ENCODE measurements at regions of chr16 and their contacts with region 1.

Region 1: GRCh38 chr16:30984669-30985400 is at the start of gene HSD3B7:
- DNase-seq: peak; percentile 97
- H3K4me3 Mint-ChIP-seq: peak within 1 kb of the TSS; percentile 87
- H3K27ac Mint-ChIP-seq: peak within 1 kb of the TSS; percentile 71
- H3K4me1 Mint-ChIP-seq: no peaks in the 10 kb centered on the region
- H3K27me3 Mint-ChIP-seq: no peaks in the 10 kb centered on the region
- CTCF ChIP-seq: peak; percentile 92
- total RNA-seq, gene HSD3B7: 25.3 and 29.2 TPM in 2 replicates

Region 2: DNA sequence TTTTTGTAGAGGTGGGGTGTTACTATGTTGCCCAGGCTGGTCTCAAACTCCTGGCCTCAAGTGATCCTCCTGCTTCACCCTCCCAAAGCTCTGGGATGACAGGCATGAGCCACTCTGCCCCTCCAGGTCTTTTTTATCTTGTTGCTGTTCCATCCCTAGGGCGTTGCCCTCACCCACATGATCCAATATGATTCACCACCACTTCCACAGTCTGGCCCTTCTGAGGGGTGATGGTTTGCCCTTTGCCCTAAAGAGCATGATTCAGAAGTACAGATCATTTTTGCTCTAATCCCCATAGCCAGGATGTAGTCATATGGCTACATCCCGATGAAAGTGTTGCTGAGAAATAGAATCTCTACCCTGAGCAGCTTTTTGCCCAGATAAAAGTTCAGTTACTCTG is 67.3 kb after region 1 on chr16:
- CTCF ChIA-PET with region 1: no interaction called
- intact Hi-C with region 1: no loop called
- DNase-seq: peak; percentile 40
- H3K4me3 Mint-ChIP-seq: no peak overlapping the region
- H3K27ac Mint-ChIP-seq: no peak overlapping the region
- H3K4me1 Mint-ChIP-seq: peaks cover 12% of the 10 kb centered on the region
- H3K27me3 Mint-ChIP-seq: no peaks in the 10 kb centered on the region
- CTCF ChIP-seq: no peak

Region 3: DNA sequence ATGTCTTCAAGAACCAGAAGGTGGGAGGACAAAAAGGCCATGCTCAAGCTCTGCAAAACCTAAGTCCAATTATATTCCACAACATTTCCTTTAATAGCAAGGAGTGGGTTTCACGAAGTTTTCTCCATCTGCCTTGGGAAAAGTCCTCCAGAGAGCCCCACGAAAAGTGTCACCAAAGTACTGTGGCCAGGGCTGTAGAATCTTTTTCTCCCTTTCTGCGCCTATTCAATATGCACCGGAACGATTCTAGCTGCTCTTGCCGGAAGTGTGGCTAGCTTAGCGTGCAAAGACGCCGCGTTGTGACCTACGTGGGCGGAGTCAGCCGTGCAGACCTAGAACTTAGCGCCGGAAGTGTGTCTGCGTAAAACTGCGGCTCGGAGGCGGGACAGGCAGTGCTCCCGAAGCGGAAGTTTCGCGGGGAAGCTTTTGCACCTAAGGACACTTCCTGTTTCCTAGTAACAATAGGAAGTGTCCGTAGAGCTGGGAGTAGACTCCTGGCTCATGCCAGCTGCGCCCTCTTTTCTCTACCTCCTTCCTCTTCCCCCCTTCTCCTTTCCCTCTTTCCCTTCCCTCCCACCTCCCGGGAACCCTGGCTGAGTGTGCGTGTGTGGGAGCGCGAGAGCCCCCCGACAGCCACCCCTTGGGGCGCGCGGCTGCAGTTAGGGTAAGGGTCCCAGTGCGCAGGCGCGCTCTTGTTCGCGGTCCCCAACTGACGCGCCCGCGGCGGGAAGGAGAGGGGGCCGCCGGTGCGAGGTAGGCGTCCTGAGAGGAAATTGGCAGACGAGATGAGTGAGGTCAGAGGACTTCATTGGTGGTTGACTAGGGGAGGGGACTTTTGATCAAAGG is 89.4 kb after region 1 on chr16 and contains the starts of genes ZNF646 and ZNF668:
- CTCF ChIA-PET with region 1: interaction called, 17 read pairs
- intact Hi-C with region 1: loop called (anchors 1 kb)
- DNase-seq: peak; percentile 98
- H3K4me3 Mint-ChIP-seq: peak within 1 kb of the TSS; percentile 88
- H3K27ac Mint-ChIP-seq: peak within 1 kb of the TSS; percentile 89
- H3K4me1 Mint-ChIP-seq: peaks cover 26% of the 10 kb centered on the region
- H3K27me3 Mint-ChIP-seq: no peaks in the 10 kb centered on the region
- CTCF ChIP-seq: no peak
- total RNA-seq, gene ZNF646: 34.4 and 34.9 TPM in 2 replicates
- total RNA-seq, gene ZNF668: 12.5 and 13.0 TPM in 2 replicates

Region 4: DNA sequence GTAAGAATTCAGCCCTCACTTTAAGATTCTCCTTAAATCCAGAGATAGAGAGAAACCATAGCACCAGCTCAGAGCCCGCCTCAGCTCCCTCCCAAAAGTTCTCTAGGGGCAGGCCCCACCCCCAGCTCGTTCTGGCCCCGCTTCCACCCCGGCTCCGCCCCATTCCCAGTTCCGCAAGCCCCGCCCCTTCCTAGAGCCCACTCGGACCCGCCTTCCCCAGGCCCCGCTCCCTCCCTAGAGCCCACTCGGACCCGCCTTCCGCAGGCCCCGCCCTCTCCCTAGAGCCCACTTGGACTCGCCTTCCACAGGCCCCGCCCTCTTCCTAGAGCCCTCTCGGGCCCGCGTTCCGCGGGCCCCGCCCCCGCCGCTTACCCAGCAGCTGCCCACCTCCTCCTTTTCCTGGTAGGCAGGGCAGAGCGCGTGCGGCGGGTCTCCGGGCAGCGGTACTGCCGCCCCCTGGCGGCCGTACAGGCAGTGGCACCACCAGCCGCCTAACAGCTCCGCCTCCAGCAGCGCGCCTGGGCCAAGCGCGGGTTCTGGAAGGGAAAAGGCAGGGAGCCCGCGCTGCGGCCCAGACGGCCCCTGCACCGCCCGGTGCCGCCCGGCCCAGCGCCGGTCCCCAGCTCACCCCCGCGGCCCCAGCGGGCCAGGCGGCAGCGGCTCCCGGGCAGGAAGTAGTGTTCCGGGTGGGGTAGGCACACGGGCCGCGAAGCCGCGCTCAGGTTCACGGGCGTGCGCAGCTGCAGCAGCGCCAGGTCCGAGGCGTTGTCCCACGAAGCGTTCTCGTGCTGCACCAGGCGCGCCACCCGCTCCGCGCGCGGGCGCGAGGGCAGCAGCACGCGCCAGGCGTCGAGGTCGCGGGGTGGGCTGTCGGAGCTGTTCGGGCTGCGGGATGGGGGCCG is 157.5 kb after region 1 on chr16:
- CTCF ChIA-PET with region 1: interaction called, 22 read pairs
- intact Hi-C with region 1: no loop called
- DNase-seq: peak; percentile 100
- H3K4me3 Mint-ChIP-seq: peak overlapping the region; percentile 59
- H3K27ac Mint-ChIP-seq: peak overlapping the region; percentile 75
- H3K4me1 Mint-ChIP-seq: peaks cover 50% of the 10 kb centered on the region
- H3K27me3 Mint-ChIP-seq: peaks cover 20% of the 10 kb centered on the region
- CTCF ChIP-seq: peak; percentile 91

Region 5: GRCh38 chr16:31242206-31242605 is 257.4 kb after region 1 on chr16:
- CTCF ChIA-PET with region 1: no interaction called
- intact Hi-C with region 1: no loop called
- DNase-seq: no peak
- H3K4me3 Mint-ChIP-seq: no peak overlapping the region
- H3K27ac Mint-ChIP-seq: no peak overlapping the region
- H3K4me1 Mint-ChIP-seq: no peaks in the 10 kb centered on the region
- H3K27me3 Mint-ChIP-seq: peaks cover 33% of the 10 kb centered on the region
- CTCF ChIP-seq: no peak

Region 6: DNA sequence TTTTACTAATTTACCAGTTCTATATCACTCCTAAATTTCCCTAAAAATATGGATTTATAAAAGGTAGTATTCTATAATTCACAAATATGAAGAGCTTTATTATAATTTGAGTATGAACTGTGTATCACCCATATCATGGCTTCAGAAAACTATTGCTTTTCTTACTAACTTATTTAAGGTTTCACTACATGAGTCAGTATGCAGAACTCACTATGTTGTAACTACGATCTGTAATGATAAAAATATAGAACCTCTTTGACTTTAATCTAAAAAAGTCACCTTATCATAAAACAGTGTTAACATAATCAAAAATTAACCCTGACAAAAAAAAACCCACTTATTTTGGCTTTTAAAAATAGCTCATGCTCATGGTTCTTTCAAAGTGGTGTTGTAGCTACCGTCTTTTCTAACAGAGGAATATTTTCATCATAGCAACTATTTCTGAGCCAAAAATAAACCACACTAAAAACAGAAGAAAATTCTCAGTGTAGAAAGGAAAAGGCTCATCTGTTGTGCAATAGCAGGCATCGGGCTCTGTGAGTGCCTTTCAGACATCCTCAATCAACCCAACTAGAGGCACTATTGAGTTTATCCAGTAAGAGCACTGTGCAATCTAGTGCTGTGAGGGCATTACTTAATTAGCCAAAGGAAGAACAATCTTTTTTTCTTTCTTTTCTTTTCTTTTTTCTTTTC is 317.0 kb after region 1 on chr16:
- CTCF ChIA-PET with region 1: no interaction called
- intact Hi-C with region 1: loop called (anchors 10 kb)
- DNase-seq: no peak
- H3K4me3 Mint-ChIP-seq: no peak overlapping the region
- H3K27ac Mint-ChIP-seq: no peak overlapping the region
- H3K4me1 Mint-ChIP-seq: no peaks in the 10 kb centered on the region
- H3K27me3 Mint-ChIP-seq: peaks cover 23% of the 10 kb centered on the region
- CTCF ChIP-seq: no peak

Region 7: GRCh38 chr16:31382485-31383161 is 397.8 kb after region 1 on chr16:
- CTCF ChIA-PET with region 1: no interaction called
- intact Hi-C with region 1: loop called (anchors 10 kb)
- DNase-seq: peak; percentile 83
- H3K4me3 Mint-ChIP-seq: no peak overlapping the region
- H3K27ac Mint-ChIP-seq: no peak overlapping the region
- H3K4me1 Mint-ChIP-seq: peaks cover 27% of the 10 kb centered on the region
- H3K27me3 Mint-ChIP-seq: peaks cover 30% of the 10 kb centered on the region
- CTCF ChIP-seq: peak; percentile 78

Region 8: DNA sequence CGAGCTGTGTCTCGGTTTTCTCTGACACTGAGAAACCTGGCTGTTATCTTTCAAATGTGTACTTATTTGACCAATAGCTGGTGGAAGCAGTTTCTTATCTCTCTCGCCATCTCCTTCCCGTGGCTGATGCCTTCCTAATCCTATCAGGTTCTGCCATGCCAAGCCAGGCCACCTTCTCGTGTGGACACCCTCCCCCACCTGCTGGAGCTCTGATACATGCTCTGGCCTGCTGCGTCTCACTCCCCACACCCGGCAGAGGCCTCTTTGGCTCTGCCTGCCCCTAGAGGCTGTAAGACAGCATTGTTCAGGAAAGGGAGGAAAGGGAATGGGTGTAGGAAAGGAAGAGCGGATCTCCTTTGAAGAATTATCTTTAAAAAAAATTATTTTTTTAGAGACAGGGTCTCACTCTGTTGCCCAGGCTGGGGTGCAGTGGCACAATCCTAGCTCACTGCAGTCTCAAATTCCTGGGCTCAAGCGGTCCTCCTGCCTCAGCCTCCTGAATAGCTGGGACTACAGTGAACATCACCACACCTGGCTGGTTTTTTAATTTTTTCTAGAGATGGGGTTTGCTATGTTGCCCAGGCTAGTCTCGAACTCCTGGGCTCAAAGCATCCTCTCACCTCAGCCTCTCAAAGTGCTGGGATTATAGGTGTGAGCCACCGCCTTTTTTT is 467.0 kb after region 1 on chr16:
- CTCF ChIA-PET with region 1: interaction called, 11 read pairs
- intact Hi-C with region 1: no loop called
- DNase-seq: peak; percentile 83
- H3K4me3 Mint-ChIP-seq: no peak overlapping the region
- H3K27ac Mint-ChIP-seq: peak overlapping the region; percentile 10
- H3K4me1 Mint-ChIP-seq: peaks cover 21% of the 10 kb centered on the region
- H3K27me3 Mint-ChIP-seq: no peaks in the 10 kb centered on the region
- CTCF ChIP-seq: peak; percentile 81

Measured in Calu3 (cell line).